ENCODE measurements at regions of chr9 and their contacts with region 1.

Region 1: DNA sequence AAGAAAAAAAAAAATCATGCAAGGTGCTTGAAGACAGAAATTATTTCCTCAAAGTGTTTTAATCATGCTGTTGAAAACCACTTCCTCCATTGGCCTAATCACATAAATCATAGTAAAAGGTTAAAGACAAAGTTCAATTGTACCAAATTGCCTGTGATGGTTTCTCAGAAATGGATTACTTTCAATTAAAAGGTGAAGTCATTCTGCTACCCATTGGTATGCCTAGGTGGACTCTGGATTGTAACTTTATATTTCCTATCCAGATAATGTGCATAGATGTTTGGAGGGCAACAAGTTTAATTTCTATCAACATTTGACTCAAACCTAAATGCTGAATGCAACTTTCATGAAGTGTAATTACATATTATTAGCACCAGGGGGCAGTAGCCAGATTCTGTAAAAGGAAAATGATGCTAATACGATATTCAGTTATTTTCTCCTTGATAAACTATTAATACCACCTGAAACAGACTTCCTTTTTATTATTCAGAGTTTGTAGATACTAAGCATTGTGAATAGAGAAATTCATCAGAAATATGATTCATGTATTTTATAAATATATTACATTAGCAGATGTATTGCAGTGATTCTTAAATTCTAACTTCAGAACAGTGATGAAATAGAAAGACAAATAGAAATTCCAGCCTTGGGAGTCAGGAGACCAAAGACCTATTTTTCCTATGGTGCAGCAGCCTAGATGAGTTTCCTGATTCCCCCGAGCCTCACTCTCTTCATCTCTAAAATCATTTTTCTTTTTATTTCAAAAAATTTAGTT is 148.2 kb downstream of the CAAP1 start:
- DNase-seq: no peak
- H3K4me3 ChIP-seq: no peak overlapping the region
- H3K27ac ChIP-seq: no peak overlapping the region
- H3K4me1 ChIP-seq: no peaks in the 10 kb centered on the region
- H3K27me3 ChIP-seq: no peaks in the 10 kb centered on the region
- CTCF ChIP-seq: peak; percentile 60 to 65 (median 62)
- POLR2A ChIP-seq: no peak

Region 2: GRCh38 chr9:27586304-27586703 is 841.9 kb after region 1 on chr9:
- intact Hi-C with region 1: loop called (anchors 10 kb)
- DNase-seq: no peak
- H3K4me3 ChIP-seq: peak overlapping the region in 1 of 3 donors; percentile 7
- H3K27ac ChIP-seq: no peak overlapping the region
- H3K4me1 ChIP-seq: no peaks in the 10 kb centered on the region
- H3K27me3 ChIP-seq: no peaks in the 10 kb centered on the region
- CTCF ChIP-seq: no peak
- POLR2A ChIP-seq: no peak